ENCODE measurements at regions of chr7 and their contacts with region 1.

Region 1: GRCh38 chr7:129210256-129210988 is 14.4 kb upstream of the AHCYL2 start:
- DNase-seq: peak; percentile 94
- H3K4me3 ChIP-seq: no peak overlapping the region; a peak in 1 of 4 replicates
- H3K27ac ChIP-seq: no peak overlapping the region
- H3K4me1 ChIP-seq: peaks cover 0 to 6% of the 10 kb centered on the region in 2 experiments; a peak in 1 of 4 replicates
- H3K27me3 ChIP-seq: no peaks in the 10 kb centered on the region
- CTCF ChIP-seq: peak; percentile 96
- EP300 ChIP-seq: no peak
- RAD21 ChIP-seq: peak; percentile 89

Region 2: DNA sequence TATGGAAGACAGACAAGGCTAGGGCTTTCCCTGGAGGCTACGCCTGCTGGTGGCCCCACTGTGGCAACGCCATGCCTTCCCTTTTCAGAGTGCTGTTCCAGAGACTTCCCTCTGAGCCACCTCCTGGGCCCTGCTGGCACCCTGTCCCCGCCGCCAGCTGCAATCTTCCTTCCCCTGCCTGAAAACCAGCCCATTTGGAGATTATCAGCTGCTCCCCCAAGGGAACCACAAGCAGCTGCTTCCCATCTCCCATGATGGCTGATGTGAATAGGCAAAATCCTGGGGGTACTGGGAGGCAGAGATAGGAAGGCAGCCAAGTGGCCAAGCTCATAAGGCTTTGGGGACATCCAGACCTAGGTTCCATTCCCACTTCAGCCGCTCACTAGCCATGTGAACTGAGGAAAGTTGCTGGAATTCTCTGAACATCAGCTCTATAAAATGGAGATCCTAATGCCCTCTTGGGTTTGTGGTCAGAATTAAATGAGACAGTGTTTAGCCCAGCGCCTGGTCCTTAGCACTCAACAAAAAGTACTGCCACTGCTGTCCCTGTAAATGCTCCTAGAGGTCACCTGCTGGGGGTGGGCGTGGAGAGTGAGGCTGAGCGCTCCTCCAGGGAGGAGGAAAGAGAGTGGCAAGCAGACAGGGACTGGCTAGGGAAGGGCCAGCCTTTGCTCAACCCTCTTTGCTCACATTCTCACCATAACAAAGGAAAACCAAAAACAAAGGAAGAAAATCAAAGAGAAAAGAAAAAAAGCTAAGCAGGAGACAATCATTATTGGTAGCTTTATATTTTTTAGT is 60.0 kb before region 1 on chr7:
- CTCF ChIA-PET with region 1: interaction called, 13 read pairs
- POLR2A ChIA-PET with region 1: no interaction called
- DNase-seq: no peak
- H3K4me3 ChIP-seq: no peak overlapping the region
- H3K27ac ChIP-seq: no peak overlapping the region
- H3K4me1 ChIP-seq: peaks cover 0 to 16% of the 10 kb centered on the region in 2 experiments; a peak in 1 of 4 replicates
- H3K27me3 ChIP-seq: no peaks in the 10 kb centered on the region; the same call in 1 of the 2 replicates
- CTCF ChIP-seq: no peak
- EP300 ChIP-seq: no peak
- RAD21 ChIP-seq: no peak

Region 3: DNA sequence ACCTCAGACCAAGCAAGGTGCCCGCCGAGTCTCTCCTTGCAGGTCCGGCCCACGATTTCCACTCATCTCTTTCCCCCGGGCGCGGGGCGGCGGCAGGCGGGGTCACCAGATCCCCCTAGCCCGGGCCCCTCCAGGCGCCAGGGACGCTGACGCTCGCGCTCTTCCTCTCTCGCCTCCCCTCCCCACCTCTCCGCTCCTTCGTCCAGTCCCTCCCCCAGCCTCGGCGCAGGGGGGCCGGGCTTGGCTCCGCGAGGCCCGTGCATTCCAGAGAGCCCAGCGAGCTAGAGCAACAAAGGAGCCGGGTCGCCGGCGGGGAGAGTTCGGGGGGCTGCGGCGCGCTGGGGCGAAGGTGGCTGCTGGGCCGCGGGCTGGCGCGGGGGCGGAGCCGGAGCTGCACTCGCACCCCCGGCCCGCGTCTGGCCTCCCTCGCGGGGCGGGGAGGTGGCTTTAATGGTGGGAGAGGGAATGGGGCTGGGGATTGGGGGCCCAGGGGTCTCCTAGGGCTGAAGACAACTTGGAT is 22.0 kb before region 1 on chr7 and contains the start of gene SMO:
- CTCF ChIA-PET with region 1: interaction called, 30 read pairs
- POLR2A ChIA-PET with region 1: interaction called, 3 read pairs
- DNase-seq: peak; percentile 96
- H3K4me3 ChIP-seq: peak within 1 kb of the TSS; percentile 72 to 93
- H3K27ac ChIP-seq: peak within 1 kb of the TSS; percentile 42 to 54; a peak in 2 of 4 replicates
- H3K4me1 ChIP-seq: peaks cover 0 to 20% of the 10 kb centered on the region in 2 experiments; a peak in 2 of 4 replicates
- H3K27me3 ChIP-seq: no peaks in the 10 kb centered on the region
- CTCF ChIP-seq: no peak
- EP300 ChIP-seq: 0 out of 4 replicates have a peak, but pooled peaks of 1 of the 2 experiments have one; percentile 12
- RAD21 ChIP-seq: no peak
- polyA plus RNA-seq, gene SMO: 34.5 and 37.0 TPM in 2 replicates

Region 4: GRCh38 chr7:129193892-129194291 is 16.5 kb before region 1 on chr7:
- CTCF ChIA-PET with region 1: interaction called, 50 read pairs
- POLR2A ChIA-PET with region 1: interaction called, 3 read pairs
- DNase-seq: no peak
- H3K4me3 ChIP-seq: no peak overlapping the region
- H3K27ac ChIP-seq: no peak overlapping the region
- H3K4me1 ChIP-seq: peaks cover 0 to 15% of the 10 kb centered on the region in 2 experiments; a peak in 2 of 4 replicates
- H3K27me3 ChIP-seq: no peaks in the 10 kb centered on the region
- CTCF ChIP-seq: no peak
- EP300 ChIP-seq: no peak
- RAD21 ChIP-seq: no peak

Region 5: DNA sequence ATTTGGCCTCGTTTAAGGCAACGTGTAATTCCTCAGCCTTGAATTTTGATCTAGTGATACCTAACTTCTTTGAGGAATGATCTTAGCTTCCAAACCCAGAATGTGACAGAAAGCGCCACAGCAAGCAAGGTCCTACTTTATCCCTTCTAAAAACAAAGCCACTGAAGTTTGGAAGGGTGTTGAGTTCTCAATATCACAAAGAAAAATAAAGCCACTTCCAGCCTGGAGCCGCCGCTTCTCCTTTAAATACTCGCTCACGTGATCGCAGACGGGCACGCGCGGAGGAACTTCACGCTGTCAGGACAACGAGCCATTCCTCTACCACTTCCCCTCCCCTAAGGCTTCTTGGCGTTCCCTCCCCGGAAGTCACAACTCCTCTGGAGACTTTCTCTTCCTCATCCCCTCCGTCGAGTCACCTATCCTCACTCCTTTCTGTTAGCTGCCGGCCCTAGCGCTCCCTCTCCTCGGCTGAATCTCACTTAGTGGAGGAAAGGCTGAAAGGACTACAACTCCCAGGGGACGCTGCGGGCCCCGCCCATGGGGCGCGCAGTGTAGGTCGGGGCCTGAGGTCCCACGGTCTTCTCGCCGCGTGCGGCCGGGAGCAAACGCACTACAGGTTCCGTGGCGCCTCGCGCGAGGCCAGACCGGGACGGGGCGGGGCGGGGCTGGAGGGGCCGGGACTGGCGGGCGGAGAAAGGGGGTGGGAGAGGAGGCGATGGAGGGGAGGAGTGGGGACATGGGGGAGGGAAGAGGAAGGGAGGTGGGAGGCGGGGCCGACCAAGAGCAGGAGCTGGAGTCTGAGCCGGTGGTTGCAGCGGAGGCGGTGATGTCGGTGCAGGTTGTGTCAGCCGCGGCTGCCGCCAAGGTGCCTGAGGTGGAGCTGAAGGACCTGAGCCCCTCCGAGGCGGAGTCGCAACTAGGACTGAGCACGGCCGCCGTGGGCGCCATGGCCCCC is 14.1 kb after region 1 on chr7 and contains the start of gene AHCYL2:
- CTCF ChIA-PET with region 1: interaction called, 51 read pairs
- POLR2A ChIA-PET with region 1: no interaction called
- DNase-seq: peak; percentile 99
- H3K4me3 ChIP-seq: peak within 1 kb of the TSS; percentile 68 to 76
- H3K27ac ChIP-seq: peak within 1 kb of the TSS; percentile 95
- H3K4me1 ChIP-seq: peaks cover 0 to 6% of the 10 kb centered on the region in 2 experiments; a peak in 3 of 4 replicates
- H3K27me3 ChIP-seq: no peaks in the 10 kb centered on the region
- CTCF ChIP-seq: no peak
- EP300 ChIP-seq: no peak; a peak in 1 of 4 replicates
- RAD21 ChIP-seq: no peak
- polyA plus RNA-seq, gene AHCYL2: 20.4 and 29.9 TPM in 2 replicates

Region 6: DNA sequence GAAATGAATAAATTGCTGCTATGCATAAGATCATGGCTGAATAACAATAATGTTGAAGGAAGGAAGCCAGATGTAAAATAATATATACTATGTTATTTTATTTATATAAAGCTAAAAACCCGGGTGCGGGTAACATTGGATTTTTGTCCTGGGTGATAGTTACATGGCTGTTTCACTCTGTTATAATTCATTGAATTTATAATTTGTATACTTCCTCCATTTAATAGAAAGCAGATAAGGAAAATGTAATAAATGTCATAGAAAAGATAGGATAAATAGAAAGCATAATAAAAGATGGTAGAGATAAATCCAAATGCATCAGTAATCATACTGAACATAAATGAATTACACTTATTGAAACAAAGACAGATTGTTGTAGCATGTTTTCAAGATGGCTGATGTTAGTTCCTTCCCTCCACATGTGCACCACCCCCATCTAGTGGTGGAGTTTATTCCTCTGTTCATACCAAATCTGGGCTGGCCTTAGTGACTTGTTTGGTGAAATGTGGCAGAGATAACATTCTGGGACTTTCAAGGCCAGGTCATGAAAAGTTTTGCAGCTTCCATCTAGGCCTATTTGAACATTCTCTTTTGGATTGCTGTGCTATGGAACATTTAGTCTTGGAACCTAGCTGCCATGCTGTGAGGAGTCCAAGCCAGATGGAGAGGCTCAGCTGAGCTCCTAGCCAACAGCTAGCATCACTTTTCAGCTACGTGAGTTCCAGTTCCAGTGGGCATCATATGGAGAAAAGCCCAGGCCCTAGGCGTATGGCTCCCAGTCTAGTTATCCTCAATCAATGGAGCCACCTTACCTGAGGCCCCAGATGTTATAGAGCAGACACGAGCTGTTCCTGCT is 61.3 kb after region 1 on chr7:
- CTCF ChIA-PET with region 1: interaction called, 11 read pairs
- POLR2A ChIA-PET with region 1: no interaction called
- DNase-seq: peak; percentile 57
- H3K4me3 ChIP-seq: no peak overlapping the region
- H3K27ac ChIP-seq: no peak overlapping the region
- H3K4me1 ChIP-seq: no peaks in the 10 kb centered on the region
- H3K27me3 ChIP-seq: no peaks in the 10 kb centered on the region
- CTCF ChIP-seq: peak; percentile 71
- EP300 ChIP-seq: peak in 1 of 2 experiments; percentile 48; a peak in 1 of 4 replicates
- RAD21 ChIP-seq: peak; percentile 81

Region 7: GRCh38 chr7:129468087-129468486 is 257.7 kb after region 1 on chr7:
- CTCF ChIA-PET with region 1: interaction called, 12 read pairs
- POLR2A ChIA-PET with region 1: no interaction called
- DNase-seq: no peak
- H3K4me3 ChIP-seq: no peak overlapping the region
- H3K27ac ChIP-seq: no peak overlapping the region
- H3K4me1 ChIP-seq: peaks cover 0 to 23% of the 10 kb centered on the region in 2 experiments; a peak in 2 of 4 replicates
- H3K27me3 ChIP-seq: no peaks in the 10 kb centered on the region
- CTCF ChIP-seq: no peak
- EP300 ChIP-seq: no peak
- RAD21 ChIP-seq: no peak